ENCODE measurements at regions of chr12 and their contacts with region 1.

Region 1: DNA sequence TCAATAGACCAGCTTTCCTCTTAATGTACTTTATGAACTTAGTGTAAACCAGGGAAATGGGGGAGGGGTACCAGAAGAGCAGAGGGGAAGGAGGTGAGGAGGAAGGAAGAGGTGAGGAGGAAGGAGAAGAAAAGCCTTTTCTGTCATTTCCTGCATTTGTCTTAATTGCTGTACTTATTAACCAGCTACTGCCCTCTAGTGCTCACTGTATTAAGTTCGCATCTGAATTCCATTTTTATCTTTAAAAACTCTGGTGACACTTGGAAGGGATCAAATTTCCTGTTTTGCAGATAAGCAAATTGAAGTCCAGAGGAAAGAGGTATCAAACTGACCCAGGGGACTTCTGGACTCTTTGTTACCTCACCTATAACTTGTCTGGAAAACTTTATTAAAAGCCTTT is 22.2 kb downstream of the MANSC1 start:
- DNase-seq: peak in 2 of 4 donors; percentile 52 to 79
- ATAC-seq: peak; percentile 74
- H3K4me3 ChIP-seq: no peak overlapping the region
- H3K27ac ChIP-seq: peak overlapping the region in 1 of 2 donors; percentile 42
- H3K4me1 ChIP-seq: peaks cover 5 to 24% of the 10 kb centered on the region in 2 donors
- H3K27me3 ChIP-seq: no peaks in the 10 kb centered on the region
- CTCF ChIP-seq: peak; percentile 46 to 61

Region 2: DNA sequence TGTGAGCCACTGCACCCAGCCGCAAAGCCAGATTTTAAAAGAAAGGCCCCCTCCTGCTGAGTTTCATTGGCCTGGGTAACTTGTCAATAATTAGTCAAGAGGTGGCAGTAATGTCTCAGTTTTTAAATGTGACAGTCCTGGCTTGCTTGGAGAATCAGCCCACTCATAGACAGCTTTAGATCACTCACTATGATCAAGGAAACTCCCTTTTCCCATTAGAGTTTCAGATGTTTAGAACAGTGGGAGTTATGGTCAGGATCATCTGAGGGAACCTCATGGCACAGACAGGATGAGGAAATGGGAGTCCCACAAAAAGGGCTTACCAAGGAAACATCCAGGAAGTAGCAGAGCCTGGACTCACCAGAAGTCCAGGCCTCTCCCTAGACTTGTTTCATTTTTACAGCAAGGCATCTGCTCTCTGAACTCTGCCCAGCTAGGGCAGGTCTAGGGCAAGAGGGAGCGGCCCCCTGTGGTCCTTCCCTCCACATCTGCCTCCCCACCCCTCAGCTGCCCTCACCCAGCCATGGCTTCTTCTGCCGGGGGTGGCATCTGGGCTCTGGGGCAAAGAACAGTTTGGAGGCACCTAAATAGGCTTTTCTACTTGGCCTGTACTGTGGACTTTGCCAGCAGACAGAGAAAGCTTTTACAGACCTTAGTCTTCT is 245.8 kb before region 1 on chr12:
- intact Hi-C with region 1: loop called in 1 of 2 experiments (anchors 5 kb)
- DNase-seq: no peak
- ATAC-seq: peak; percentile 76
- H3K4me3 ChIP-seq: no peak overlapping the region
- H3K27ac ChIP-seq: peak overlapping the region; percentile 57 to 62
- H3K4me1 ChIP-seq: peaks cover 3 to 7% of the 10 kb centered on the region in 2 donors
- H3K27me3 ChIP-seq: no peaks in the 10 kb centered on the region
- CTCF ChIP-seq: peak; percentile 13 to 15

Measured in left lung (tissue), 14 donors.